Posterior vena cava (tissue), 2 donors: ENCODE measurements at regions of chr14 and their contacts with region 1.

Region 1: DNA sequence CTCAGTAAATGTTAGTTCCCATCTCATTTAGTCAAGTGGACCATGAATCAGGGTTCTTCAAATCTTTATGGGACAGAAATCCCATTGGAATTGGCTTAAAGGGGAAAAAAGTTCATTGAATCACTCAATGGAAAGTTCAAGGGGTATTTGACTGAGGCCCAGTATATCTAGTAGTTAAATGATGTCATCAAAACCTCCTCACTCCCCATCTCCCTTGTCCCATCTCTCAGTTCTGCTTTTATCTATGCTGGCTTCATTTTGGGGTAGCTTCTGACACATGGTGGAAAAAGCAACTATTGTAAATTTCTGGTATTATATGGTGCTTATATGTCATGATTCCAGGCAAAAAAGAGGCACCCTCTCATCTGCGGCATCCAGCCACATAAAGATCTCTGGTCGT is 51.9 kb downstream of the DAAM1 start:
- DNase-seq: no peak

Region 2: DNA sequence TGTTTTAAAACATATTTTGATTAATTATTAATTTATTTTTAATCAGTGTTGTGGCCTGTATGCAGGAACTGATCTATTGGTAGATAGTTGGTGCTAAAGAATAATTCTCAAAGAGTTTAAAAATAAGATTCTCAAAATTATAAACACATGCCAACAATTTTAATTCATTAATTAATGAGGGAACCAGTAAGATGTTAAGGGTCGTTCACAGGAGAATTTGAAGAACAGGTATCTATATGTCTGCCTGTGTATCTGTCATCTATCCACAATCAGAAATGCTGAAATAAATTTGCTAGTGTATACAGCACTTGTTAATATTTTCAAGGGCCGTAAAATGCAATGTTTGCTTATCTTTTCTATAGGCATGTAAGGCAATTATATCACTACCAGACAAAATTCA is 33.5 kb before region 1 on chr14:
- intact Hi-C with region 1: loop called in 1 of 2 experiments (anchors 1 kb)
- DNase-seq: no peak

Region 3: GRCh38 chr14:59217011-59217410 is 23.3 kb before region 1 on chr14:
- intact Hi-C with region 1: loop called in 1 of 2 experiments (anchors 1 kb)
- DNase-seq: no peak